Heart left ventricle (tissue), 16 donors: ENCODE measurements at regions of chr16 and their contacts with region 1.

Region 1: DNA sequence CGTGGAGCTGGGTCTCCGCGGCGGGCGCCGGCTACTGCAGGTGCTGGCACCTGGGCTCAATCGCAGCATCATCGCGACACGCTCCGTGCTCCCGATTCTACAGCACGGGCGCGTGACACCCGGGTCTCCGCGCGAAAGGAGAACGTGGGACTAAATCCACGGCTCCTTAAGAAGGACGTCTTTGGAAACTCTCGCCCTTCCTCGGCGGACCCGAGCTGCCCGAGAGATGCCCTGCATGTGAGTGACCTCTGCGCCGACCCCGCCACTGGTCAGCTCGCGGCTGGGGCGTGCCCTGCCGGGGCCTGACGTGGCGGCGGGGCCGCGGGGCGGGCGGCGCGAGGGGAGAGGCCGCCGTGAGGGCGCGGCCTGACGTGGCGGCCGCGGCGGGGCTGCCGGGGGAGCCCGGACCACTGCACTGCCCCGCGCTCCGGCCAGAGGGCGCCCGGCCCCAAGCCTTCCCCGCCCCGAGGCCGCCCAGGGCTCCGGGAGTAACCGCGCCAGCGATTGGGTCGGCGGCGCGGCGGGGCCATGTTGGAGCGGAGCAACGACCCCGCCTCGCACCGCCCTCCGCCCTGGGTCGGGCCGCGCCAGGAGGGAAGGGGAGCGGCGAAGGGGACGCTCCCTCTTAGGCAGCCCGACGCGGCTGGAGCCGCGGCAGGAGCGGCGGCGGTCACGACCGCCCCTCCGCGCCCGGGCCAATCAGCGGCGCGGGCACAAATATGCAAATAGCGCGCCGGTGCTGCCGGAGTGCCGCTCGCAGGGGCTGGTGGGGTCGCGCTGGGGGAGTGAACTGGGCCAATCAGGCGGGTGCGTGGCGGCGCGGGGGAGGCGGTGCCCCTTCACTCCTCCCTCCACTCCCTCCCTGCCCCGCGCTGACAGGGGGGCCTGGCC is 75.6 kb downstream of the CHD9 start:
- DNase-seq: peak; percentile 98 to 99 (median 99)
- ATAC-seq: peak; percentile 95 to 96 (median 96)
- H3K4me3 ChIP-seq: peak overlapping the region; percentile 62 to 89 (median 84)
- H3K27ac ChIP-seq: peak overlapping the region; percentile 88 to 98 (median 97)
- H3K4me1 ChIP-seq: peaks cover 0 to 52% (median 26%) of the 10 kb centered on the region in 12 donors
- H3K27me3 ChIP-seq: no peaks in the 10 kb centered on the region
- CTCF ChIP-seq: peak; percentile 31 to 91 (median 68)
- POLR2A ChIP-seq: peak in 1 of 2 donors; percentile 70

Region 2: DNA sequence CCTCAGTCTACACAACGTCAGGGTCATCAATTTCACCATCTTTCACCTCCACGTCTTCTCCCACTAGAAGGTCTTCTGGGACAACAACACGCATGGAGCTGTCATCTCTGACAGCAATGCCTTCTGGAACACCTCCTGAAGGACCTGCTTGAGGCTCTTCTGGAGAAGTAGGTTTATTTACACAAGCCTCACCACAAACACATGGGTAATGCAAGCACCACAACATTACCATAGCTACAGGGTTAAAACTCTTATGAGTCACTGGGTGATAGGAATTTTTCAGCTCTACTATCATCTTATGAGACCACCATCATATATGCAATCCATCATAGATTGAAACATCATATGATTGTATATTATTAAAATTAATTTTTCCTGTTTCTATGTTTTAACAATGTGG is 293.2 kb before region 1 on chr16:
- intact Hi-C with region 1: no loop called
- DNase-seq: no peak
- ATAC-seq: no peak
- H3K4me3 ChIP-seq: no peak overlapping the region
- H3K27ac ChIP-seq: no peak overlapping the region
- H3K4me1 ChIP-seq: no peaks in the 10 kb centered on the region
- H3K27me3 ChIP-seq: peaks cover 0 to under 1% (median 0%) of the 10 kb centered on the region in 9 donors
- CTCF ChIP-seq: no peak
- POLR2A ChIP-seq: no peak

Region 3: DNA sequence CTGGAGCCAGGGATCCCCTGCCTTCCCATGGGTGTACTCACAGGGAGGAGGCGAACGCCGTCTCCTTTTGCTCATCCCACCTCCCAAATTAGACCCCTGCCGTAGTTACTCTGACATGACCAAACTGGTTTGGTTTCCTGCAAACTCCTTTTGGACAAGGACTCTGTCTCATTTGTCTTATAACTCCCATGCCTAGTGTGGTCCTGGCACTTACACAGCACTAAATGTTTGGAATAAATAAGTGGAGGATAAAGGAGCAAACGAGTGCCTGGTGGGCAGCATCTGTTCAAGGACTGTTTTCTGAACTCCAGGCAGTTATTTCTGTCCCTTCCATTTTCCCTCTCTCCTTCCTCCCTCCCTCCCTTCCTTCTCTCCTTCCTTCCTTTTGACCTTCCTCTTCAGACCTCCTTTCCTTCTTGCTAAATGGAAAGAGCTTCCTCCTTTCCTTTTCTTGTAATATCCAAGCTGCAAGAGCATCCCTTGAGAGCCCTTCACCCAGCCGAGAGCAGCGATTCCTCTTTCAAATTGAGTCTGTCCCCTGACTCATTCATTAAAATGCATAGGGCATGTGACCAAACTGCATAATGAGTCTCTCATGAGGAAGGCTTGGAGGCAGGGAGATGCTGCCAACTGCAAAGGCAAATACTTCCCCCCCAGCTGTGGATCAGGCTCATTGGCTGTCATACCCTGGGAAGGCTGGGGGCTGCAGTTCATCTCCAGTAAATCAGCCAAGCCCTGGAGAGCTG is 38.8 kb before region 1 on chr16:
- intact Hi-C with region 1: loop called in 3 of 10 experiments (anchors 2 to 5 kb)
- DNase-seq: peak; percentile 73 to 85 (median 81)
- ATAC-seq: peak; percentile 24 to 54 (median 44)
- H3K4me3 ChIP-seq: peak overlapping the region in 3 of 12 donors; percentile 0 to 11 (median 7)
- H3K27ac ChIP-seq: peak overlapping the region; percentile 68 to 97 (median 88)
- H3K4me1 ChIP-seq: peaks cover 18 to 68% (median 57%) of the 10 kb centered on the region in 12 donors
- H3K27me3 ChIP-seq: no peaks in the 10 kb centered on the region
- CTCF ChIP-seq: no peak
- POLR2A ChIP-seq: no peak

Region 4: DNA sequence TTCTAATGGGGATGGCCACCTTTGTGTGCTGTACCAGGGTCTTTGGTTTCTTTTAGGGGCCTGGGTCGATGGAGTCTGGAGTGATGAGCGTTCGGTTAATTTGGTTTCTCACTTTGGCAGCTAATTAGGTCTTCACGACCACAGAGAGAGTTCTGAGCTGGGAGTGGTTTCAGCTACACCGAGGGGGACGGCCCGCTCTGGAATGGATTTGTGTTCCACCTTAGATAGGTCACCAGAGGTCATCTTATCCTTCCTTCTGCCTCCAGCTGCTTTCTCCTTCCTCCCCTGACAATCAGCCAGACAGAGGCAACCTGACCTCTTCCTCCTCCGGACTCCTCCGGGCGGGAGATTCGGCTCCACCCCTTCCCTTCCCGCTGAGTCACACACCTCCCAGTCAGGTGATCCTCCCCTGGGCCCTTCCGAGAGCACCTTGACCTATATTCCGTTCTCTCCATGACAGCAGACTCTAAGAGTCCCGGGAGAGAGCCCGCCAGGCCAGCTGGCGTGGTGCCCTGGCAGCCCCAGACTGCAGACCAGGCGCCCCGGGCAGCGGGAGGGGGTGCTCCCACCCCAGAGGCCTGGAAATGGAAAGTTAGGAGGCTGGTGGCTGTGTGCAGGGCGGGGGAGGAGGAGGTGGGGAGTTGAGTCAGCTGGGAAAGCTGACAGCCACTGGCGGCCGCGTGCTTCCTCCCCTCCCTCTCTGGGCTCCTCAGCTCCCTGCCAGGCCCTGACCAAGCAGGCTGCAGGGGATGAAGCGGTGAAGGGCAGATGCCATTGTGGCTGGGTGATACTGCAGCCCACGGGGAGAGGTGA is 30.9 kb before region 1 on chr16:
- intact Hi-C with region 1: loop called in 8 of 10 experiments (anchors 1 to 5 kb)
- DNase-seq: peak; percentile 93 to 98 (median 95)
- ATAC-seq: peak; percentile 89 to 95 (median 92)
- H3K4me3 ChIP-seq: peak overlapping the region in 11 of 12 donors; percentile 14 to 59 (median 45)
- H3K27ac ChIP-seq: peak overlapping the region; percentile 88 to 98 (median 94)
- H3K4me1 ChIP-seq: peaks cover 16 to 63% (median 59%) of the 10 kb centered on the region in 12 donors
- H3K27me3 ChIP-seq: no peaks in the 10 kb centered on the region
- CTCF ChIP-seq: no peak
- POLR2A ChIP-seq: peak in 1 of 2 donors; percentile 10

Region 5: GRCh38 chr16:53207810-53208752 is 77.7 kb after region 1 on chr16:
- intact Hi-C with region 1: loop called in 9 of 10 experiments (anchors 1 to 10 kb)
- DNase-seq: peak in 4 of 5 donors; percentile 41 to 52 (median 43)
- ATAC-seq: peak; percentile 90 to 96 (median 93)
- H3K4me3 ChIP-seq: peak overlapping the region; percentile 11 to 65 (median 56)
- H3K27ac ChIP-seq: peak overlapping the region; percentile 66 to 92 (median 82)
- H3K4me1 ChIP-seq: peaks cover 3 to 58% (median 33%) of the 10 kb centered on the region in 12 donors
- H3K27me3 ChIP-seq: no peaks in the 10 kb centered on the region
- CTCF ChIP-seq: peak; percentile 33 to 75 (median 54)
- POLR2A ChIP-seq: no peak

Region 6: DNA sequence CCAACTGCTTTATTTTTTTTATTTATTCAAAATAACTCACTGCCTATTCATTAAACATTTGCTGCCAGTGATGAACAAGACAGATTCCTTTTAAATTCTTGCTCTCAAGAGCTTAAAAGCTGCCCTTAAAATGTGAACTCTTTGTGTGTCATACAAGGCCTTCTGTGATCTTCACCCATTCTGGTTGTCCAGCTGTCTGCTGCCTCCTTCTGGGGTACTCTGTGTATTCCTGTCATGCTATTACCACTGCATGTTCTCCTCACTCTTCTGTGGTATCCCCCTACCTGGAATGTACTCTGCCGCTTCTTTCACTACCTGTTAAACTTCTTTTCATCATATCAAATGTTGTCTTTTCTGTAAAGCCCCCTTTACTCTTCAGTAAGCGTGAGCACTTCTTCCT is 90.2 kb after region 1 on chr16:
- intact Hi-C with region 1: loop called in 2 of 10 experiments (anchors 5 kb)
- DNase-seq: no peak
- ATAC-seq: peak in 3 of 4 donors; percentile 47 to 66 (median 65)
- H3K4me3 ChIP-seq: peak overlapping the region in 1 of 12 donors; percentile 9
- H3K27ac ChIP-seq: peak overlapping the region; percentile 20 to 86 (median 69)
- H3K4me1 ChIP-seq: peaks cover 23 to 80% (median 64%) of the 10 kb centered on the region in 12 donors
- H3K27me3 ChIP-seq: no peaks in the 10 kb centered on the region
- CTCF ChIP-seq: peak in 10 of 12 donors; percentile 4 to 56 (median 28)
- POLR2A ChIP-seq: no peak